ENCODE measurements at regions of chrX and their contacts with region 1.

Region 1: GRCh38 chrX:42948723-42949657 is 171.0 kb upstream of the PPP1R2C start:
- DNase-seq: no peak
- H3K4me3 ChIP-seq: no peak overlapping the region
- H3K27ac ChIP-seq: no peak overlapping the region
- H3K4me1 ChIP-seq: peaks cover 19% of the 10 kb centered on the region
- CTCF ChIP-seq: no peak

Region 2: GRCh38 chrX:42565739-42566138 is 383.3 kb before region 1 on chrX:
- CTCF ChIA-PET with region 1: no interaction called
- POLR2A ChIA-PET with region 1: no interaction called
- intact Hi-C with region 1: no loop called
- DNase-seq: no peak
- H3K4me3 ChIP-seq: no peak overlapping the region
- H3K27ac ChIP-seq: no peak overlapping the region
- H3K4me1 ChIP-seq: no peaks in the 10 kb centered on the region
- CTCF ChIP-seq: no peak

Region 3: GRCh38 chrX:42627891-42628290 is 321.1 kb before region 1 on chrX:
- CTCF ChIA-PET with region 1: no interaction called
- POLR2A ChIA-PET with region 1: no interaction called
- intact Hi-C with region 1: no loop called
- DNase-seq: no peak
- H3K4me3 ChIP-seq: no peak overlapping the region
- H3K27ac ChIP-seq: no peak overlapping the region
- H3K4me1 ChIP-seq: no peaks in the 10 kb centered on the region
- CTCF ChIP-seq: no peak

Region 4: DNA sequence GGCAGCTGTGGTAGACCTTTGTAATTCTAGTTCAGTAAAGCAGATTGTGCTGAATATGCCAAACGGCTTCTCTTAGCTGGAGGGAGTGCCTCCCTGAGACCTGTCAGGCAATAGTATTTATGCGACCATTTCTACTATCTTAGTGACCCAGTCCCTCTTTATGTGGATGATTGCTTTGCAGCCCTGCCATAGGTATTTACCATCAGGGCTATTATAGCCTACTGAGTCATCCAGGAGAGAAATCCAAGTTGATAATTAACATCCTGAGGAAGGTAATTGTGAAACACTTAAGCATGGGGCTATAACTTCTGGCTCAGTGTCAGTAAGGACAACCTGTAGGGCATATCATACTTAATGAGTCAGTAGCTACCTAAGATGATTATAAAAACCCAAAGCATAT is 603.2 kb after region 1 on chrX:
- CTCF ChIA-PET with region 1: no interaction called
- POLR2A ChIA-PET with region 1: no interaction called
- intact Hi-C with region 1: loop called (anchors 5 kb)
- DNase-seq: no peak
- H3K4me3 ChIP-seq: no peak overlapping the region
- H3K27ac ChIP-seq: no peak overlapping the region
- H3K4me1 ChIP-seq: no peaks in the 10 kb centered on the region
- CTCF ChIP-seq: no peak